H1 (cell line): ENCODE measurements at regions of chr6 and their contacts with region 1.

Region 1: DNA sequence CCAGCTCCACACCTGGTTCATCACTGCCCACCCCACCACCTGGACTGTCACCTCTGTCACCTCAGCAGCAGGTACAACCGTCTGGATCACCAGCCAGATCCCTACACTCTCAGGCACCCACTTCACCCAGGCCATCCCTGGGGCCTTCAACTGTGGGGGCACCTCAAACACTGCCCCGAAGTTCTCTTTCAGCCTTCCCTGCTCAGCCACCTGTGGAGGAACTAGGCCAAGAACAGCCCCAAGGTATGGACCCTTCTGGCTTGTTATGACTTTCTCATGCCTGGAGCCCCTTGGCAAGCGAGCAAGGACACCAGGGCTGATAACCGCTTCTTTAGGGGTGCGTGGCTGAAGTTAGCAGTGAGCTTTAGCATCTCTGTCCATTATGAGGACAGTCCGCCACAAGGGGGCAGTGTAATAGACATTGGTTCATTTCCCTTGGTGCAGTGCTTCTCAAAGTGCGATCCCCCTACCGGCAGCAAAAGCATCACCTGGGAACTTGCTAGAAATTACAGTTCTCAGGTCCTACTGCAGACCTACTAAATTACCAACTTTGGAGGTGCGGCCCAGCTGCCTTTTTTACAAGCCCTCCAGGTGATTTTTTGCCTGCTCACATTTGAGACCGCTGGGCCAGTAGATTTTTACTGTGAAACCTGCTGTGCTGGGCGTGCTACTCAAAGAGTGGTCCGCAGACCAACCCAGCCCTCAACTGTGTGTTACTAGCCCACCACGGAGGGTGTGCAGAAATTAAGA is 32.5 kb downstream of the PNPLA1 start:
- DNase-seq: peak; percentile 79 to 97
- H3K4me3 ChIP-seq: no peak overlapping the region
- H3K27ac ChIP-seq: no peak overlapping the region
- H3K4me1 ChIP-seq: peaks cover 0 to 5% (median 1%) of the 10 kb centered on the region in 4 experiments; a peak in 3 of 7 replicates
- H3K27me3 ChIP-seq: no peaks in the 10 kb centered on the region
- CTCF ChIP-seq: peak; percentile 79 to 99 (median 99)
- EP300 ChIP-seq: no peak
- POLR2A ChIP-seq: no peak
- RAD21 ChIP-seq: peak; percentile 69 to 80

Region 2: DNA sequence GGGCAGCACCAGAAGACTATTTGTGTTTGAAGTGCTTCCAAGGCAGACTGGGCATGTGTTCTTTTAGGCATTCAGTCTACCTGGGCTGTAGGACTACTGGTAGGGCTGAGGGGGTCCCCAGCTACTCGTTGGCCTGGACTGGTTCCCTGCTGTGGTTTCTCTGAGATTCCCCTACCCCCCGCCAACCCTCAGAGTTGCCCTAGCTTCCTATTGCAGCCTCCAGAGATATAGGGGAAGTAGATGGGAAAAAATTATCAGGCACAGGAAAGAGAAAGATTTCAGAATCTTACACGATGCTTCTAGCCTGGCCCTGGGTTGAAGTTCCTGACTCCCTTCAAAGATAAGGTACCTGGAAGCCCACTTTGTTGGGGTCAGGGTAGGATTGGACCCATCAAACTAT is 83.3 kb before region 1 on chr6:
- CTCF ChIA-PET with region 1: no interaction called
- POLR2A ChIA-PET with region 1: no interaction called
- DNase-seq: no peak
- H3K4me3 ChIP-seq: no peak overlapping the region
- H3K27ac ChIP-seq: no peak overlapping the region
- H3K4me1 ChIP-seq: no peaks in the 10 kb centered on the region
- H3K27me3 ChIP-seq: no peaks in the 10 kb centered on the region
- CTCF ChIP-seq: no peak
- EP300 ChIP-seq: no peak
- POLR2A ChIP-seq: no peak
- RAD21 ChIP-seq: no peak

Region 3: DNA sequence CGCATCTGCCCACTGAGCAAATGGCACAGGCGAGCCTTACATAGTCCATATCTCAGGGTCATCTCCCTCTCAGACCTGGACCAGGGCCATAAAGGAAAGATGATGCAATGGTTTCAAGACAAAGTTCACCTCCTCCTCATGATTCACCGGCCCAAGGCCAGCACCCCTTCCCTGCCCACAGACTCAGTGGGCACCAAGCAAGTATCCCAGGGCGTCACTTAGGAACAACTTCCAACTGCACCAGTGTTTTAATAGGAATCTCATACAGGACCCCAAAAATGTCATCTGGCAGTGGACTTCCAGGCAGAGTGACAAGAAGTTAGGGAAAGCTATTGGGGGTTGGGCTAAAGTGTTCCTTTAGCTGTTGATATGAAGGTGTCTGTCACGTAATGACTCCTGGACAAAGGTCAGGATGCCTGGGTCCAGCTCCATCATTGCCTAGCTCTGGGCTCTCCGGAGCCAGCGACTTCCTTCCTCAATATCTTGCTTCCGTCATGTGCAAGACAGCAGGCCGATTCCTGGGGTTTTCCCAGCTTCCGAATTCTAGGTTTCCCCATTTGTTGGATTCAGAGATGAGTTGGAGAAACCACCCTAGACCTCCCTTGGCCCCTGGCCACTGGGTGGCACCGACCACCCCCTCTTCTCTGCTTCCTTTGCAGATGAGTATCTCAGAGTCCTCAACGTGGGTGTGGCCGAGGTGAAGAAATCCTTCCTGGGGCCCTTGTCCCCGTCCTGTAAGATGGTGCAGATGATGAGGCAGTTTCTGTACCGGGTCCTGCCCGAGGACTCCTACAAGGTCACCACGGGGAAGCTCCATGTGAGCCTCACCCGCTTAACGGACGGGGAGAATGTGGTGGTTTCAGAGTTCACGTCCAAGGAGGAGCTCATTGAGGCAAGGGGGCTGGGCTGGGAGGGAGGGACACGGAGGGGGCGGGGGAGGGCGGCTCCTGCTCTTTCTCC is 11.5 kb before region 1 on chr6:
- CTCF ChIA-PET with region 1: interaction called, 93 read pairs
- POLR2A ChIA-PET with region 1: interaction called, 3 read pairs
- DNase-seq: no peak
- H3K4me3 ChIP-seq: no peak overlapping the region
- H3K27ac ChIP-seq: no peak overlapping the region
- H3K4me1 ChIP-seq: peaks cover 2 to 5% (median 3%) of the 10 kb centered on the region in 4 experiments; a peak in 6 of 7 replicates
- H3K27me3 ChIP-seq: no peaks in the 10 kb centered on the region
- CTCF ChIP-seq: 0 out of 4 replicates have a peak, but pooled peaks of 1 of the 3 experiments have one; percentile 5
- EP300 ChIP-seq: no peak
- POLR2A ChIP-seq: no peak
- RAD21 ChIP-seq: peak in 1 of 2 experiments; percentile 27; a peak in 1 of 4 replicates

Region 4: GRCh38 chr6:36314221-36315014 is 12.0 kb after region 1 on chr6:
- CTCF ChIA-PET with region 1: interaction called, 137 read pairs
- POLR2A ChIA-PET with region 1: interaction called, 4 read pairs
- DNase-seq: peak in 1 of 2 experiments; percentile 31
- H3K4me3 ChIP-seq: no peak overlapping the region
- H3K27ac ChIP-seq: no peak overlapping the region
- H3K4me1 ChIP-seq: peaks cover 0 to 3% (median under 1%) of the 10 kb centered on the region in 4 experiments; a peak in 2 of 7 replicates
- H3K27me3 ChIP-seq: no peaks in the 10 kb centered on the region
- CTCF ChIP-seq: no peak
- EP300 ChIP-seq: no peak
- POLR2A ChIP-seq: no peak
- RAD21 ChIP-seq: no peak

Region 5: DNA sequence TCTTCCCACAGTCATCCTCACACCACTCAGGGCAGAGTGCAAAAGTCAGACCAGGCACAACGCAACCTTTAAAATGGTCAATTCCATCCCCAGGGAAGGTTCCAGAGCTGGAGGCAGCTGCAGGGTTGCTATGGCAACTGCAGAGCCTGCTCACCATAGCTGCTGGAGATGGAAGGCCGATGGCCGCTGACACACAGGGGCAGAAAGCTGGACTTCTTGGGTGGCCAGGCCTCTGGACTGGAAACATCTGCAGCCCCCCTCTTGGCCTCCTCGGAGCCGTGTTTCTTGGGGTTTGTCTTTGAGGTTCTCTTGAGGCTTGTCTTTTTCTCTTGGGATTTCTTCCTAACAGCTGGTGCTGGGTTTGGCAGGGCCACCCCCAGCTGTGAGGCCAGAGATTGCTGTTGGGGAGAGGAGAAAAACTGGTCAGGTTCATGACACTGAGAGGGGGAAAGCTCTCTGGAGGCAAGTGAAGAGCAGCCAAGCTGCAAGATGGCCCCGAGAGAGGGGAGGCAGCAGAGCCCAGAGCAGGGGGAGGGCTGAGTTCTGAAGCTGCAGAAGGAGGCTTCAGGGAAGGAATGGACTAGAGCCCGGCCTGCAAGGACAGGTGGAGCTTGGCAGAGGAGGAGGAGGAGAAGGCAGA is 24.1 kb after region 1 on chr6:
- CTCF ChIA-PET with region 1: interaction called, 137 read pairs
- POLR2A ChIA-PET with region 1: interaction called, 4 read pairs
- DNase-seq: no peak
- H3K4me3 ChIP-seq: no peak overlapping the region
- H3K27ac ChIP-seq: no peak overlapping the region
- H3K4me1 ChIP-seq: peaks cover 0 to 16% (median 5%) of the 10 kb centered on the region in 4 experiments; a peak in 5 of 7 replicates
- H3K27me3 ChIP-seq: no peaks in the 10 kb centered on the region; a peak in 1 of 7 replicates
- CTCF ChIP-seq: no peak
- EP300 ChIP-seq: no peak
- POLR2A ChIP-seq: no peak
- RAD21 ChIP-seq: no peak

Region 6: GRCh38 chr6:36340618-36341454 is 38.4 kb after region 1 on chr6:
- CTCF ChIA-PET with region 1: interaction called, 23 read pairs
- POLR2A ChIA-PET with region 1: no interaction called
- DNase-seq: peak in 1 of 2 experiments; percentile 87
- H3K4me3 ChIP-seq: peak overlapping the region; percentile 2 to 53 (median 43); a peak in 7 of 8 replicates
- H3K27ac ChIP-seq: no peak overlapping the region
- H3K4me1 ChIP-seq: peaks cover 0 to 3% (median under 1%) of the 10 kb centered on the region in 4 experiments; a peak in 4 of 7 replicates
- H3K27me3 ChIP-seq: peaks cover 0 to 9% (median 3%) of the 10 kb centered on the region in 4 experiments; a peak in 3 of 7 replicates
- CTCF ChIP-seq: peak; percentile 85 to 98 (median 92)
- EP300 ChIP-seq: no peak
- POLR2A ChIP-seq: no peak
- RAD21 ChIP-seq: peak; percentile 49 to 64